ENCODE measurements at regions of chr4 and their contacts with region 1.

Region 1: DNA sequence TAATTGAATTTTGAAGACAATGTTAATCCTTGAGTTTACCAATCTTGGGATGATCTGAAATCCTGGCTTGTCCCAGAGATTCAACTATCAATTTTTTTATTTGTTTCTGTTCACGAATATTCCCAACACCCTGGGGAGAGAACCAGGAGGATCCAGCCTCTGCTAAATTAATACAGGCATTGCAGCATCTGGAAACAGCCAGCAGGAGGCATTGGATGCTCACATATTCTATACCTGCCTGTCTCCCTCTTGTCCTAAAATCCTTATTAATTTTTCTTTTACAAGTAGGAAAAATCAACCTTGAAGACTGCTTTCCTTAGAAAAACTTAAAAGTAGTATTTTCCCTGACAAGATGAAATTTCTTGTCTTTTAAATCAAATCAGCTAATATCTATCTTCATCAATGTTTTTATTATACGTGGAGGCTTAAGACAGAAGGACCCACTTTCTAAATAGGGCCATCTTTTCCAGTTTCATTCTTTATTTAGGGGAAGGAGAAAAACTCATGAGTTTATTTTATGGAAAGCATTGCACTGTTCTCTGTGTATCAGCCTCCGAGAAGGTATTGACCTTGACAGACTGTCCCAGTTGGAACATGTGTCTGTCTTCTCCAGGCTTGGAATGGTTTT is 102.4 kb downstream of the CLNK start:
- DNase-seq: peak; percentile 31
- H3K4me3 ChIP-seq: no peak overlapping the region
- H3K27ac ChIP-seq: no peak overlapping the region
- H3K4me1 ChIP-seq: no peaks in the 10 kb centered on the region
- H3K27me3 ChIP-seq: no peaks in the 10 kb centered on the region
- CTCF ChIP-seq: peak; percentile 82

Region 2: DNA sequence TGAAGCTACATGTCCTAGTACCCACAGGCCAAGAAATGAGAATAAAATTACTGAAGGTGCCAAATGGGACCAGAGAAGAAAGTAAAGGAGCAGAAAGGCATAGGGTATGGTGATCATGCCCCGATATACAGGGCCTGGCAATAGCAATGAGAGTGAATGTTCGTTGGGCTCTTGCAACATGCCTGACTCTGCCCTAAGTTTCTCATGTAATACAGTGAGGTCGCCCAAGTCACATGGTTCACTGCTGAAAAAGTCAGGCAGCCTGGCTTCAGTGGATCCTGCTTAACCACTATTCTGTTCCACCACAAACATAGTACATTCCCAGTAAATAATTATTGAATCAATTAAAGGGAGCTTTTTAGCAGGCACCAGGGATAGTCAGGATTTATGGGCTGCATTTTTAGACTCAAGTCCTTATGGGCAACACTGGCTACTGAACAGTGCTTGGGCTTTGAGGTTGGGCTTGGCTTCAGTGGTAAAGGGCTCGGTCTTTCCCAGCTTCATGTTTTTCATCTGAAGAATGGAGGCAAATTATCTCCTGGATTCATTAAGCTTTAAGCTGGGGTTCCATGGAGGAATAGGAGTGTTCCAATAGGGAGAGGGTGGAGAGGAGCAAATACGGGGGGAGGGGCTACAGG is 57.9 kb before region 1 on chr4:
- intact Hi-C with region 1: no loop called
- DNase-seq: no peak
- H3K4me3 ChIP-seq: no peak overlapping the region
- H3K27ac ChIP-seq: no peak overlapping the region
- H3K4me1 ChIP-seq: peaks cover 2% of the 10 kb centered on the region
- H3K27me3 ChIP-seq: no peaks in the 10 kb centered on the region
- CTCF ChIP-seq: no peak

Region 3: GRCh38 chr4:10704430-10704810 is 122.2 kb after region 1 on chr4:
- intact Hi-C with region 1: no loop called
- DNase-seq: no peak
- H3K4me3 ChIP-seq: no peak overlapping the region
- H3K27ac ChIP-seq: no peak overlapping the region
- H3K4me1 ChIP-seq: no peaks in the 10 kb centered on the region
- H3K27me3 ChIP-seq: no peaks in the 10 kb centered on the region
- CTCF ChIP-seq: no peak

Region 4: DNA sequence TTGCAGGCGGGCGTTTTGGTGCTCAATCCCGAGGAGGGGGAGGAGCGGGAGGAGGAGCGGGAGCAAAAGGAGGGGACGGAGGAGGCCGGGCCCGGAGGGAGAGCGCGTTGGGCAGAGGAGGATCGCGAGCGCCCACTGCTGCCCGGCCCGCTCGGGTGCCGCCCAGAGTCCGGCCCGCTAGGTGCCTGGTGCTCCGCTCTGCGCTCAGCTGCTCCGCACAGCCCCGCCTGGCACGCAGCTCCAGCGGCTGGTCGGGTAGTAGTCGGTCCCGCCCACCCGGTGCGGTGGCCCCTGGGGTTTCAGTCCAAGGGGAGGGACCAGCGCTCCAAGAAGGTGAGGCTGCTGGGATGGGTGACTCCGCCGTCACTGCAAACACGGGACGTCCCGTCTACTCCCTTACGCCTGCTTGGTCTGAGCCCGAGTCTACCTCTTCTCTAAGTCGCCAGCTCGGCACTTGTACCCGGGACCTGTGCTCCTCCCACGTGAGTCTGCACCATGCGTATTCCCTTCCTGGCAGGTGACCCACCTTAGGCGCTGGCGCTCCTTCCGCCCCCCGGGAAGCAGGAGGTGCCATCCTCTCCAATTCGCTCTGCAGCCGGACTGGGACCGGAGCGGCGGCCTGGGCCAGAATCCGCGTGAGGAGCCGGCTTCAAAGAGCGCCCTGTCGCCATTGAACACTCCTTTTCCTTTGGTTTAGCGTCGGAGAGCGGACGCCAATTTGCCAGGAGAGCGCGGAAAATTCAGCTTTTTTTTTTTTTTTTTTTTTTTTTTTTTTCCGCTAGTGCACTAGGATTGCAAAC is 846.9 kb after region 1 on chr4:
- intact Hi-C with region 1: loop called (anchors 5 kb)
- DNase-seq: peak; percentile 91
- H3K4me3 ChIP-seq: peak overlapping the region; percentile 62
- H3K27ac ChIP-seq: peak overlapping the region; percentile 88
- H3K4me1 ChIP-seq: peaks cover 4% of the 10 kb centered on the region
- H3K27me3 ChIP-seq: no peaks in the 10 kb centered on the region
- CTCF ChIP-seq: peak; percentile 61

Region 5: DNA sequence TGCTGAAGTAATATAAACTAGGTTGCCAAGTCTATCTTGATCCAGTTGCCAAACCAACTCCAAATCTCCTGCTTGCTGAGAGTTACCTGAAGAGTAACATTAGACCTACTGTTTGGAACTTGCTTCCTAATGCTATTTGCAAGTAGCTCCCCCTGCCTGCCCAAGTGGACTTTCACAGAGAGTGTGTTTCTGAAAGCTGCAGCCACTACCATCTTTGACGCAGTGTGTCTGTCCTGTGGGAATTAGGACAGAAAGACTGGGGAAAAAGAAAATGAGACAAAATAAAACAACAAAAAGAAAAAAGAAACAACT is 1041.5 kb after region 1 on chr4:
- intact Hi-C with region 1: loop called (anchors 10 kb)
- DNase-seq: peak; percentile 75
- H3K4me3 ChIP-seq: no peak overlapping the region
- H3K27ac ChIP-seq: no peak overlapping the region
- H3K4me1 ChIP-seq: no peaks in the 10 kb centered on the region
- H3K27me3 ChIP-seq: no peaks in the 10 kb centered on the region
- CTCF ChIP-seq: peak; percentile 52

Region 6: GRCh38 chr4:11720292-11720691 is 1138.1 kb after region 1 on chr4:
- intact Hi-C with region 1: loop called (anchors 5 kb)
- DNase-seq: no peak
- H3K4me3 ChIP-seq: no peak overlapping the region
- H3K27ac ChIP-seq: no peak overlapping the region
- H3K4me1 ChIP-seq: no peaks in the 10 kb centered on the region
- H3K27me3 ChIP-seq: no peaks in the 10 kb centered on the region
- CTCF ChIP-seq: peak; percentile 83

Measured in colonic mucosa (tissue), 4 donors.